ENCODE measurements at regions of chr9 and their contacts with region 1.

Region 1: DNA sequence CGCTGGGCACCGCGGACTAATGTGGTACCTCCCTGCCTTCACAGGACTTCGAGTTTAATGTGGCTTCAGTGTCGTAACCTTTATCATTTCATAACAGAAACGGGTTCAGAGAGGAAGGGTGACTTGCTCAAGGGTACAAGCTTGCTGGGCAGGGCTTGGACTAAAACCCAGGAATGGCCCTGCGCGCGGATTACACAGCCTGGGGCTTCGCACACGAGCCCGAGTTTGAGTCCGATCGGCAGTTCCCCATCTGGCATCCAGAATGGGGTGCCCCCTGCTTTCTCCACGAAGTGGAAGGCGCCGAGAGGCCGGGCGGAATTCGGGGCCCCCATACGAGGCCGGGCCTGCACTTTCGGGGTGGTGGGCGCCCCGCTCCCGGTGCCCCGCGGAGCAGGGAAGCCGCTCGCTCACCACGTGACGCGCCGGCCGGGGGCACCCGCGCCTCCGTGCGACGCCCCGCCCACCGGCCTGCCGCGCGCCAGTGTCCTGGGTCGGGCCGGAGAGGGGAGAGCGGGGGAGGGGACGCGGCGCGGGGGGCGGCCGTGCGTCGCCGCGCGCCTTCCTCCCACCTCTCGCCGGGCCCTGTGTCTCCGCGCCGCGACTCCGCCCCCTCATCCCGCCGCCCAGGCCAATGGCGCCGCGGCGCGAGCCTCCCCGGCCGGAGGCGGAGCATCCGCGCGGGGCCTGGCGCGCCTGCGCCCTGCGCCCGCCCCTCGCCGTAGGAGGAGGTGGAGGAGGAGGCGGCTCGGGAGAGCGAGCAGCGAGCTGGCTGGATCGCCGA is at the start of gene SET:
- DNase-seq: peak; percentile 86 to 97 (median 93)
- ATAC-seq: peak; percentile 89
- H3K4me3 ChIP-seq: peak within 1 kb of the TSS; percentile 84
- H3K4me3 Mint-ChIP-seq: peak within 1 kb of the TSS; percentile 86 to 99 (median 90)
- H3K27ac ChIP-seq: peak within 1 kb of the TSS; percentile 85
- H3K27ac Mint-ChIP-seq: peak within 1 kb of the TSS; percentile 87 to 99 (median 97)
- H3K4me1 ChIP-seq: peaks cover 22 to 48% of the 10 kb centered on the region in 2 donors
- H3K4me1 Mint-ChIP-seq: peaks cover 45 to 67% (median 59%) of the 10 kb centered on the region in 7 donors
- H3K27me3 ChIP-seq: no peaks in the 10 kb centered on the region
- H3K27me3 Mint-ChIP-seq: no peaks in the 10 kb centered on the region
- total RNA-seq, gene SET: 222 to 488 (median 270) TPM

Region 2: GRCh38 chr9:128643519-128644300 is 45.0 kb before region 1 on chr9:
- CTCF ChIA-PET with region 1: interaction called, 5 read pairs
- POLR2A ChIA-PET with region 1: interaction called, 5 read pairs
- intact Hi-C with region 1: loop called (anchors 2 to 5 kb)
- DNase-seq: no peak
- ATAC-seq: no peak
- H3K4me3 ChIP-seq: no peak overlapping the region
- H3K4me3 Mint-ChIP-seq: no peak overlapping the region
- H3K27ac ChIP-seq: no peak overlapping the region
- H3K27ac Mint-ChIP-seq: peak overlapping the region in 1 of 9 donors; percentile 60
- H3K4me1 ChIP-seq: no peaks in the 10 kb centered on the region
- H3K4me1 Mint-ChIP-seq: peaks cover 0 to 3% (median 0%) of the 10 kb centered on the region in 7 donors
- H3K27me3 ChIP-seq: no peaks in the 10 kb centered on the region
- H3K27me3 Mint-ChIP-seq: no peaks in the 10 kb centered on the region

Region 3: DNA sequence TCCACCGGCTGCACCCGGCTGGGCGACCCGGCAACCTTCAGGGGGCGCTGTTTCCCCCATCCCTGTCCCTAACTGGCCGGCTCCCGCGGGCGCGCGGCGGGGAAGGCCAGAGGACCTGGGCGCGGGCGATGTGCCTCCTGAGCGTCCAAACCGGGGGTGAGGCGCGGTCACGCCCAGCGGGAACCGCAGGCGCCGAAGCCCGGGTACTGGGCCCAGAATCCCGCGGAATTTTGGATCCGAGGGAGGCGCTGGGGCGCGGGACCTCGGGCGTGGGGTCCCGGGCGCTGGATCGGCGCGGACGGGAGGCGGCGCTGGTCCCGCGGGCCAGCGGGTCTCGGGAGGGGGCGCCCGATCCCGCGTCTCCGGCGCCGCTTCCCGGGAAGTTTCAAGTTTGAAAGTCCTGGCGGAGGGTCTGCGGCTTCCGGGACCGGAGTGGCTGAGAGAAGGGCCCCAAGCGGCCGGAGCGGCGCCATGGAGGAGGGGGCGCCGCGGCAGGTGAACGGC is 13.8 kb after region 1 on chr9 and contains the start of gene PKN3:
- CTCF ChIA-PET with region 1: interaction called, 7 read pairs
- POLR2A ChIA-PET with region 1: interaction called, 5 read pairs
- intact Hi-C with region 1: loop called (anchors 1 to 2 kb)
- DNase-seq: peak; percentile 63 to 95 (median 82)
- ATAC-seq: peak; percentile 94
- H3K4me3 ChIP-seq: peak within 1 kb of the TSS; percentile 68
- H3K4me3 Mint-ChIP-seq: peak within 1 kb of the TSS; percentile 84 to 94 (median 91)
- H3K27ac ChIP-seq: peak within 1 kb of the TSS; percentile 60
- H3K27ac Mint-ChIP-seq: peak within 1 kb of the TSS; percentile 52 to 91 (median 79)
- H3K4me1 ChIP-seq: no peaks in the 10 kb centered on the region
- H3K4me1 Mint-ChIP-seq: peaks cover 4 to 17% (median 10%) of the 10 kb centered on the region in 7 donors
- H3K27me3 ChIP-seq: no peaks in the 10 kb centered on the region
- H3K27me3 Mint-ChIP-seq: no peaks in the 10 kb centered on the region
- total RNA-seq, gene PKN3: 1.1 to 11.7 (median 1.6) TPM

Region 4: DNA sequence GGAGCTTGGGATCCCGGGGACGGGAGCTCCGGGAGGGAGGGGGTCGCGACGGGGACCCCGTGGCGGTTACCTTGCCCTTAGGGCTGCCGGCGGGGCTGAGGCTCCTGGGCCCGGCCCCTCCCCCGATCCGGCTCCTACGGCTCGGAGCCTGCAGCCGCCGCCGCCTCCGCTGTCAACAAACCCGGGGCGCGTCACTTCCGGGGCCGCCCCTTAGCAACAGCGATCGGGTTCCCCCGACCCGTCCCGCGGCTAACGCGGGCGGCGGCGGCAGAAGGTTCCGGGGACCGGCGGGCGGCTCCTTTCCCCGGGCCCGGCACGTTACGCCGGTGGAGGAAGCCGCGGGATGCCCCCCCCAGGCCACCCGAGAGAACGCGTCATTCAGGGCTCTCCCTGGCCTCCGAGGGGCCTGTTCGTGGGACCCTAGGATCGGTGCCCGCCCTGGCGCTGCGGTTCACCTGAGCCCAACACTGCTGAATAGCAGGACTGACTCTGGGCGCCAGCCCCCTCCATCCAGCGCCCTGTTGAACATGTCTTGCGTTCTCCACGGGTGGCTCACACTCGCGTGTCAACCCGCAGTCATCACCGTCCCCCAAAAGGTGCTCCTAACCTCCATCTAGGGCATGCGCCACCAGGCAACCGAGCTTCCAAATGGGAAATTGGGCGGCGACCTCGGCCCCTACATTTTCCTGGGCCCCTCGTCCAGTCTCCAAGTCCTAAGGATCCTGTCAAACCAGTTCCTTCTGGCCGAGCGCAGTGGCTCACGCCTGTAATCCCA is 83.2 kb after region 1 on chr9 and contains the start of gene ZER1:
- CTCF ChIA-PET with region 1: no interaction called
- POLR2A ChIA-PET with region 1: interaction called, 11 read pairs
- intact Hi-C with region 1: no loop called
- DNase-seq: peak; percentile 92 to 98 (median 95)
- ATAC-seq: peak; percentile 97
- H3K4me3 ChIP-seq: peak within 1 kb of the TSS; percentile 97
- H3K4me3 Mint-ChIP-seq: peak within 1 kb of the TSS; percentile 95 to 99 (median 98)
- H3K27ac ChIP-seq: peak within 1 kb of the TSS; percentile 93
- H3K27ac Mint-ChIP-seq: peak within 1 kb of the TSS; percentile 93 to 100 (median 100)
- H3K4me1 ChIP-seq: peaks cover 7 to 12% of the 10 kb centered on the region in 2 donors
- H3K4me1 Mint-ChIP-seq: peaks cover 21 to 40% (median 39%) of the 10 kb centered on the region in 7 donors
- H3K27me3 ChIP-seq: no peaks in the 10 kb centered on the region
- H3K27me3 Mint-ChIP-seq: no peaks in the 10 kb centered on the region
- total RNA-seq, gene ZER1: 22.7 to 51.2 (median 34.7) TPM

Region 5: GRCh38 chr9:128902351-128903078 is 213.8 kb after region 1 on chr9:
- CTCF ChIA-PET with region 1: no interaction called
- POLR2A ChIA-PET with region 1: no interaction called
- intact Hi-C with region 1: loop called in 1 of 2 experiments (anchors 5 kb)
- DNase-seq: peak; percentile 61 to 93 (median 90)
- ATAC-seq: peak; percentile 95
- H3K4me3 ChIP-seq: peak overlapping the region; percentile 55
- H3K4me3 Mint-ChIP-seq: peak overlapping the region; percentile 76 to 87 (median 84)
- H3K27ac ChIP-seq: peak overlapping the region; percentile 89
- H3K27ac Mint-ChIP-seq: peak overlapping the region; percentile 85 to 98 (median 96)
- H3K4me1 ChIP-seq: peaks cover 64 to 65% of the 10 kb centered on the region in 2 donors
- H3K4me1 Mint-ChIP-seq: peaks cover 32 to 84% (median 73%) of the 10 kb centered on the region in 7 donors
- H3K27me3 ChIP-seq: no peaks in the 10 kb centered on the region
- H3K27me3 Mint-ChIP-seq: no peaks in the 10 kb centered on the region

Measured in naive thymus-derived CD4-positive, alpha-beta T cell (primary cell).